ENCODE measurements at regions of chr11 and their contacts with region 1.

Region 1: DNA sequence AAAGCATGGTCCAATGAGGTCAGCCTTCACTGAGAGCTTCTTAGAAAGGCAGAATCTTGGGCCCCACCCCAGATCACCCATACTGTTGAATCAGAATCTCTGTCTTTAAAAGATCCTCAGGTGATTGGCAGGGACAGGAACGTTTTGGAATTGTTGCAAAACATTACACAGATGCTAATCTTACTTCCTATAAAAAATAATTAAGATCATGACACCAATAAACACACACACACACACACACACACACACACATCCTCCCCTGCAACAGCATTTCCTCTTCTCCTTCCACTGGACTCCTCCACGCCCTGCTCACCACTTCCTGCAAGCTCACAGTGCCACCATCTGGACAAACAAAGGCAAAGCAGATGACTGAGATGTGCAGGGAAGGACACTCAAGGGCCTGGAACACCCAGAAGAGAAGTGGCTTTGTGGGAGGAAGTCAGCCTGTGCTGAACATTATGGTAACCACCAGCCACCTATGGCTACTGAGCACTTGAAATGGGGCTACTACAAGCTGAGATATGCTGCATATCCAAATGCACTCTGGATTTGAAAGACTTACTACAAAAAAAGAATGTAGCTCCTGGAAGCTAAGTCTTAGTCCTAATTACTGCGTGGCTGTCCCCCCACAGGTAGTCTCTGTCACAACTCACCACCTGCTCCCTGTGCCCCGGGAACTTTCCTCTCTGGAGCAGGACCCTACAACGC is 65.6 kb downstream of the BTG4 start:
- DNase-seq: peak; percentile 75
- H3K4me3 Mint-ChIP-seq: no peak overlapping the region
- H3K27ac Mint-ChIP-seq: peak overlapping the region; percentile 87
- H3K4me1 Mint-ChIP-seq: peaks cover 7% of the 10 kb centered on the region
- H3K27me3 Mint-ChIP-seq: peaks cover 3% of the 10 kb centered on the region
- CTCF ChIP-seq: peak; percentile 35

Region 2: GRCh38 chr11:110463153-110463552 is 983.4 kb before region 1 on chr11:
- CTCF ChIA-PET with region 1: no interaction called
- intact Hi-C with region 1: loop called (anchors 10 kb)
- DNase-seq: peak; percentile 21
- H3K4me3 Mint-ChIP-seq: no peak overlapping the region
- H3K27ac Mint-ChIP-seq: no peak overlapping the region
- H3K4me1 Mint-ChIP-seq: no peaks in the 10 kb centered on the region
- H3K27me3 Mint-ChIP-seq: no peaks in the 10 kb centered on the region
- CTCF ChIP-seq: no peak

Region 3: GRCh38 chr11:111283945-111284481 is 162.5 kb before region 1 on chr11:
- CTCF ChIA-PET with region 1: interaction called, 13 read pairs
- intact Hi-C with region 1: loop called (anchors 1 kb)
- DNase-seq: peak; percentile 43
- H3K4me3 Mint-ChIP-seq: peak overlapping the region; percentile 61
- H3K27ac Mint-ChIP-seq: no peak overlapping the region
- H3K4me1 Mint-ChIP-seq: peaks cover 13% of the 10 kb centered on the region
- H3K27me3 Mint-ChIP-seq: peaks cover 30% of the 10 kb centered on the region
- CTCF ChIP-seq: no peak

Region 4: GRCh38 chr11:111841370-111842053 is 395.0 kb after region 1 on chr11:
- CTCF ChIA-PET with region 1: no interaction called
- intact Hi-C with region 1: no loop called
- DNase-seq: peak; percentile 78
- H3K4me3 Mint-ChIP-seq: no peak overlapping the region
- H3K27ac Mint-ChIP-seq: no peak overlapping the region
- H3K4me1 Mint-ChIP-seq: peaks cover 10% of the 10 kb centered on the region
- H3K27me3 Mint-ChIP-seq: no peaks in the 10 kb centered on the region
- CTCF ChIP-seq: peak; percentile 79